ENCODE measurements at regions of chr11 and their contacts with region 1.

Region 1: DNA sequence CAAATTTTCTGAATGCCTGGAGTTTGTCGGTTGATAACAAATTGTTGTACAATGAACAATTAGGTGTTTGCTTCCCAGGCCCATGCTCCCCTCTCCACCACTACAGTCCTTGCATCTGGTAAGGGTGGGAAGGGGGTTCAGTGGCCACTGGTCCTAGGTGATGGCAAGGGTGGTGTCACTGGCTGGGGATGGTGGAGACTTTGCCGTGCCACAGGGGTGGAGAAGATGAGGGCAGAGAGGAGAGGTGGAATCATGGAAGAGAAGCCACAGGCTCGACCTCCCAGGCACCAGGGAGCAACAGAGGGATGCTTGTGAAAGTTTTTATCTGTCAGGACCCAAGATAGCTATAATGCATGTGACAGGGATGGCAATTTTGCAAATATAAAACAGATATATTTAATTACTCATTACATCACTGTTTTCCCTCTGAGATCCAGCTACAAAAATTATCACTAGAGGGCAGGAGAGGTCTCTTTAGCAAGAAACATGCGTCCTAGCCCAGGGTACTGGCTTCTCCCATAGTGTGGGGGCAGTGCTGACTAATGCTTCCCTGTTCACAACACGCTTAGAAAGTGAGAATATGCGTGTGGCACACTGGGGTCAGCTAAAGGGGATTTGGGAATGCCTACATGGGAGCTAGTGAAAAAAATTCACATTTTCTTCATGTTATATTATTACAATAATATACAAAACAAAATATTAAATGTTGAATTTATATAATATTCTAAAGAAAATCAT is 49.0 kb upstream of the AMPD3 start:
- DNase-seq: peak; percentile 56
- ATAC-seq: peak; percentile 84
- H3K4me3 Mint-ChIP-seq: no peak overlapping the region
- H3K27ac Mint-ChIP-seq: no peak overlapping the region
- H3K4me1 Mint-ChIP-seq: peaks cover 25% of the 10 kb centered on the region
- H3K27me3 Mint-ChIP-seq: no peaks in the 10 kb centered on the region

Region 2: GRCh38 chr11:10653926-10654810 is 248.1 kb after region 1 on chr11:
- CTCF ChIA-PET with region 1: interaction called, 146 read pairs
- POLR2A ChIA-PET with region 1: no interaction called
- DNase-seq: peak; percentile 59
- ATAC-seq: peak; percentile 72
- H3K4me3 Mint-ChIP-seq: no peak overlapping the region
- H3K27ac Mint-ChIP-seq: no peak overlapping the region
- H3K4me1 Mint-ChIP-seq: peaks cover 24% of the 10 kb centered on the region
- H3K27me3 Mint-ChIP-seq: peaks cover 2% of the 10 kb centered on the region

Region 3: DNA sequence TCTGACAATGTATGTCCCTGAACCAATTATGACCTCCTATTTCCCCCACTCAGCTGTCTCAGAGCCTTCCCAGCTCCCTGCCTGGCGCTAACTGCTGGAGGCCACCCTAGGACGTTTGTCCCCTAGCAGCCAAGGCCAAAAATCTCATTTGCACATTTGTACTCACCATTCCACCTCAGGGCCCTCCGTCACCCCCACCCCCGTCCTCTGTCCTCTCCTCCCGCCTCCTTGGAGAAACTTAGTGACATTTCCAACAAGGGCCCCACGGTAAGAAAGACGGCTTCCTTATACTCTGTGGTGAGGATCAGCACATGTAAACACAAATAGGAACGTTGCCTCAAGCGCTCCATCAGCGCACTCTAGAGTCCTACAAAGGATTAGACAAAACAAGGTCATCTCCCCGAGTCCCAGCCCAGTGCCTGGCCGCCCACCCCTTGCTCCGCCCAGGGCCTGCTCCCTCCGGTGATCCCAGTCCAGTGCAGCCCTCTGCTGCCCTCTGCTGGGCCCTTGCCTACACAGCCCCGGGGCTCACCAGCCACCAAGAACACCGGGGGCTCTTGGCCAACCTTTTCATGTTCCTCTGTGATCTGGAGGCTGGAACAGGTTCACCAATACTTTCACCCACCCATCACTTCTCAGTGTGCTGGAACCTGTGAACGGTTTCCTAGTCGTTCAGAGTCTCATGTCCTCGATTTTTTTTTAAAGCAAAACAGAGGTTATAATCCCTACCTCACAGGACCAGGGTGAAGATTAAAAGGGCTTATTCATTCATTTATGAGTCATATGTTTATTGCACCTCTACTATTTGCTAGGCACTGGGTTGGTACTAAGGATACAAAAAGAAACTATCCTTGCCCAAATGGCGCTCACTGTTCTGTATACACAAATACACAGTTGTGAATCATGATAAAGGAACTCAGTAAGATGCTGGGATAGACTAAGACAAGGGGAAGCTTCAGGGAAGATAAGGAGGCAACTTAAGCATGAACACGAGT is 329.8 kb after region 1 on chr11:
- CTCF ChIA-PET with region 1: interaction called, 16 read pairs
- POLR2A ChIA-PET with region 1: no interaction called
- DNase-seq: peak; percentile 91
- ATAC-seq: peak; percentile 100
- H3K4me3 Mint-ChIP-seq: peak overlapping the region; percentile 20
- H3K27ac Mint-ChIP-seq: no peak overlapping the region
- H3K4me1 Mint-ChIP-seq: peaks cover 10% of the 10 kb centered on the region
- H3K27me3 Mint-ChIP-seq: peaks cover 27% of the 10 kb centered on the region

Measured in activated CD8-positive, alpha-beta T cell treated with anti-CD3 and anti-CD28 coated beads, Interleukin-2, amount 10 ng/mL, durations not matched to agents 7 days and 5 days (primary cell).